ENCODE measurements at regions of chr10 and their contacts with region 1.

Region 1: GRCh38 chr10:22670788-22671187 is 43.6 kb downstream of the PIP4K2A start:
- DNase-seq: peak in 1 of 5 donors; percentile 41
- ATAC-seq: peak in 3 of 4 donors; percentile 72 to 88 (median 74)
- H3K4me3 ChIP-seq: no peak overlapping the region
- H3K27ac ChIP-seq: peak overlapping the region in 1 of 12 donors; percentile 4
- H3K4me1 ChIP-seq: peaks cover 0 to 91% (median 20%) of the 10 kb centered on the region in 12 donors
- H3K27me3 ChIP-seq: no peaks in the 10 kb centered on the region
- CTCF ChIP-seq: no peak
- POLR2A ChIP-seq: no peak

Region 2: DNA sequence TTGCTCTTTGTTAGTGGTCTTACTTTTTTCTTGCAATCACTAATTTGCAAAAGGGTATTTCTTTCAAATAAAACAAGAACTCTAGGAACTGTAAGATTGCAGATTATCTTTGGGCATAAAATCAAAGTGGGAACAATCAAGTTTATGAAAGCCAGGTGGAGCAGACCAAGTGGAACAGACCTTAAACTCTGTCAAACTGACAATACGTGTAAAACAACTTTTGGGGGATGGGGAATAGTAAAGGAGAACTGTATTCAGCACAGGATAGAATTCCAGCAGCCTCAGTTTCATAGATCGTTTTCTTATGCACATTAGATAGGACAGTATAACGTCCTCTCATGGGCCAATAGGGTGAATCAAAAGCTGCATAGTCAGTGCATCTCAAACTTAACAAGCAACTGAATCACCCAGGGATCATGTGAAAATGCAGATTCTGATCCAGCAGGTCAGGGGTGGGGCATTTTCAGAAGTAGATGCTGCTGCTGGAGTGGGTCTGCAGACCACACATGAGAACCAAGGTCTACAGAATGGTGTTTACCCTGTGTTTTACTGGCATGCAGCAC is 77.1 kb before region 1 on chr10:
- intact Hi-C with region 1: loop called in 1 of 10 experiments (anchors 2 kb)
- DNase-seq: no peak
- ATAC-seq: no peak
- H3K4me3 ChIP-seq: no peak overlapping the region
- H3K27ac ChIP-seq: no peak overlapping the region
- H3K4me1 ChIP-seq: peaks cover 0 to 27% (median 0%) of the 10 kb centered on the region in 12 donors
- H3K27me3 ChIP-seq: no peaks in the 10 kb centered on the region
- CTCF ChIP-seq: no peak
- POLR2A ChIP-seq: no peak